ENCODE measurements at regions of chr19 and their contacts with region 1.

Region 1: GRCh38 chr19:19554074-19555023 is 16.3 kb downstream of the CILP2 start:
- DNase-seq: no peak
- H3K4me3 ChIP-seq: no peak overlapping the region
- H3K27me3 ChIP-seq: no peaks in the 10 kb centered on the region
- CTCF ChIP-seq: peak; percentile 81

Region 2: DNA sequence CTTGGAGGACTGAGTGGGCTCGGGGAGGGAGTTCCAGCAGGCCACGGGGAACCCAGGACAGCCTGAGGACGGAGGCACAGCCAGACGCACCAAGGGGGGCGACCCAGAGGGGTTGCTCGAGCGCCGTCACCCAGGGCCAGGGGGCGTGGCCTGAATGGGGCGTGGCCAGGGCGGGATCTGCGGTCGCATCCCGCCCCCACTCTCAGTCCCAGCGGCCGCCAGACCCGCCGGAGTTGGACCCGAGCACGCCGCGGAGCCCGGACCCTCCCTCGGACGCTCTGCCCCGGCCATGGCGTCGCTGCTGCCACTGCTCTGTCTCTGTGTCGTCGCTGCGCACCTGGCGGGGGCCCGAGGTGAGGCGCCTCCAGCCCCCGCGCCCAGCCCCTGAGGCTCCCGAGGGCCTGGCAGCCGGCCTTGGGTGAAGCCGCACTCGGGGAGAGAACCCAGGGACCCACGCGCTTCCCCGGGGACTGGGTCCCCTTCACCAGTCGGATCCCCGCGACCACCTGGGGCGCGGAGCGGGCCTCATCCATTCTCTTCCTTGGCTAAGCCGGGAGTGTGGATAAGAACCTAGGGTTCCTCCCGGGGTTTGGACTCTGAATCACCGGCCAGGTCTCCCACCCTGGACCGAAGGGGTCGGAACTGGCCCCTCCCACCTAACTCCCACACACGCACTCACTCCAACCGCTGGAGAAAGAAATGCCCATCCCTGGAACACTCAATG is 16.1 kb before region 1 on chr19 and contains the start of gene CILP2:
- CTCF ChIA-PET with region 1: interaction called, 103 read pairs
- POLR2A ChIA-PET with region 1: no interaction called
- DNase-seq: no peak
- H3K4me3 ChIP-seq: peak within 1 kb of the TSS; percentile 31
- H3K27me3 ChIP-seq: peaks cover 3% of the 10 kb centered on the region
- CTCF ChIP-seq: no peak
- polyA plus RNA-seq, gene CILP2: 0.39 and 0.77 TPM in 2 replicates

Region 3: GRCh38 chr19:19568802-19569756 is 14.7 kb after region 1 on chr19:
- CTCF ChIA-PET with region 1: interaction called, 16 read pairs
- POLR2A ChIA-PET with region 1: no interaction called
- DNase-seq: no peak
- H3K4me3 ChIP-seq: no peak overlapping the region
- H3K27me3 ChIP-seq: no peaks in the 10 kb centered on the region
- CTCF ChIP-seq: no peak

Region 4: DNA sequence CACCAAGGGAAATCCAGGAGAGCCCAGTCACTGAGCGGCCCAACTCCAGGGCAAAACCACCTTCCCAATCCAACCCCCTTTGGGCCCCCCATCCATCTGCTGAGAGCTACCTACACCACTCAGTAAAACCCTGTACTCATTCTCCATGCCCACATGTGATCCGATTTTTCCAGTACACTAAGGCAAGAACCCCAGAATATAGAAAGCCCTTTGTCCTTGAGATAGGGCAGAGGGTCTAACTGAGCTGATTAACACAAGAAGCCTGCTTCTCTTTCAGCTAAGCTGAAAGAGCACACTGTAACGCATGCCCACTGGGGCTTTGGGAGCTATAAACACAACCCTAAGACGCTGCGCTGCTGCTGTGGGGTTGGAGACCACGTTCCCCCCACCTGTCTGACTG is 28.1 kb after region 1 on chr19:
- CTCF ChIA-PET with region 1: interaction called, 10 read pairs
- POLR2A ChIA-PET with region 1: no interaction called
- DNase-seq: no peak
- H3K4me3 ChIP-seq: no peak overlapping the region
- H3K27me3 ChIP-seq: no peaks in the 10 kb centered on the region
- CTCF ChIP-seq: no peak

Region 5: DNA sequence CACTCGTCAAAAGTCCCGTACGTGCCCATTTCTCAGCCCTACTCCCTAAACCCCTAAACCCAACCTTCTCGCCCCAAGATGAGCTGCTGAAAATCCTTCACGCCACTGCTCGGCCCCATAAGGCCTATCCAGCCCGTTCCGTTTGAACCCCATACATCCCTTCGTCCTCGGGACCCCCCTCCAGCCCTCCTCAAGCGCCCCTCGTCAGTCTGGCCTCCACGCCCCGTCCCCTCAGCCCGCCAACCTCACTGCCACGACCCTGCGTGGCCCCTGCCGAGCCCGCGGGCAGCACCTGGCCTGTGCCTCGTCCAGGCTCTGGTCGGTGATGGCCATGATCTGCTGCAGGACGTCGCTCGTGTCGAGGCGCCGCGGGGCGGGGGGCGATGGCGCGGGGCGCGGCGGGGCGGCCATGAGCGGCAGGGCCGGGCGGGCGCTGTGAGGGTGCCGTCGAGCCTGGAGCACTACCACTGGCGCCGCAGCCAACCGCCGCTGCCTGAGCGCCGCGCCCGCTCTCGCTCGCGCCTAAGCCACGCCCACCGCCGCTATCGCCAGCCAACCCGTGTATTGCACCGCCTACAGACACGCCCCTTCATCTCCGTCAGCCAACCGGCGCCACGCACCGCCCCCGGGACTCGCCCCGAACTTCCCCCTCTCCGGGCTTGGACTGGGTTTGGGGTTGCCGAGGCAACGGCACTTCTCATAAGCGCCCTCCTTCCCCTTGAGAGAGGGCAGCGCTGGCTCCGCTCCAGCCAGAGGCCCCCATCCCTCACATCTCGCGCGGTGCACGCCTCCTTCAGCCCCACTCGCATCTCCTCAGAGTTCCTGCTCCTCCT is 64.1 kb after region 1 on chr19 and contains the start of gene PBX4:
- CTCF ChIA-PET with region 1: interaction called, 10 read pairs
- POLR2A ChIA-PET with region 1: no interaction called
- DNase-seq: peak; percentile 49
- H3K4me3 ChIP-seq: peak within 1 kb of the TSS; percentile 64
- H3K27me3 ChIP-seq: no peaks in the 10 kb centered on the region
- CTCF ChIP-seq: no peak
- polyA plus RNA-seq, gene PBX4: 1.3 and 1.9 TPM in 2 replicates

Region 6: DNA sequence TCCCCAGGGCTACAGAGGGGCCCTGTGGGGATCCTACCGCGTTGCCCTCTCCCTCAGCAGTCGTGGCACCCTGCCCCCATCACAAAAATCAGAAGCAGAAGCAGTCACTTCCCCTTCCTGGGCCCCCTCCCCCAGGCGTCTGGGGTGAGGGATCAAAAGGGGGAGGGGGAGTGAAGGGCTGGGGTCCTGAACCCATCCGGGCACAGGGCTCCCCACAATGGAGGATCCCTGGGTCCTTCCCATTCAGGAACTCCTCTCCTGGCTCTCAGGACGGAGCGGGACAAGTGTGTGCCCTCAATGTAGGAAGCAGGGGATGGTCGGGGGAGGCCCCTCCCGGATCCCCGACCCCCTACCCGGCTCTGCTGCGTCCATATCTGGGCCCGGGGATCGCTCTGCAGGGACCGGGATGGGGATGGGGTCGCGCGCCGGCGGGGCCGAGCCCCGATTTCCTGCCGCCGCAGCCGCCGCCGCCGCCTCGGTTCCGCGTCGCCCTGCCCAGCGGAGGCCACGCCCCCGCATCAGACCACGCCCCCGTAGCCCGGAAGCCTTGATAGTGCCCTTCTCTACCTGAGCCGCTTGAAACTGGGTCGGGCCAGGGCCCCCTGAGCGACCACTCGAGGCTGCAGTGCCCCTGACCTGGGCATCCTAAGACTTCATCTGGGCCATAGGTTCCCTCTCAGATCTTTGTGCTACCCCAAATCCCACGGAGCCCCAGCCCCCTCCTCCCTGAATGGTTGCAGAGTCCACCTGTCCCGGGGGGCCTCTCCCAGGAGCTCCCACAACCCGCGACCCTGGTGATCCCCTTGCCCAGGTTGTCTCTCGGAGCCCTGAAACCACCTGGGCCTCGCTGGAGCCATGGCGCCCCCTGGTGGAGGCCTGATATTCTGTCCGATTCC is 89.1 kb after region 1 on chr19 and contains the start of gene GMIP:
- CTCF ChIA-PET with region 1: interaction called, 12 read pairs
- POLR2A ChIA-PET with region 1: no interaction called
- DNase-seq: no peak
- H3K4me3 ChIP-seq: peak within 1 kb of the TSS; percentile 62
- H3K27me3 ChIP-seq: no peaks in the 10 kb centered on the region
- CTCF ChIP-seq: peak; percentile 93
- polyA plus RNA-seq, gene GMIP: 3.8 and 4.4 TPM in 2 replicates